ENCODE measurements at regions of chr12 and their contacts with region 1.

Region 1: DNA sequence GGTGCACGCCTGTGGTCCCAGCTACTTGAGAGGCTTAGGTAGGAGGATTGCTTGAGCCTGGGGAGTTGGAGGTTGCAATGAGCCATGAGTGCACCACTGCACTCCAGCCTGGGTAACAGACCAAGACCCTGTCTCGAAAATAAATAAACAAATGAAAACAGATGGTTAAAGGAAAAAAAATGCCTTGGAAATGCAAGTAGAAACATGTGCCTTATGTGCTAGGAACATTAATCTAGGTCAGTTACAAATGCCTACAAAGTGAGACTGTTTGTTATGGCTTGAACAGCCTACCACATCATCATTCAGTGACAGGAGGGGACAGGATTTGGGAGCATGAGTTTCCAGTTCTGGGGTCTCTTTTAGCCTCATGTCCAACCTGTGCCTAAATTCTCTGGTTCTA is 52.4 kb upstream of the BCAT1 start:
- DNase-seq: no peak
- CTCF ChIP-seq: no peak

Region 2: DNA sequence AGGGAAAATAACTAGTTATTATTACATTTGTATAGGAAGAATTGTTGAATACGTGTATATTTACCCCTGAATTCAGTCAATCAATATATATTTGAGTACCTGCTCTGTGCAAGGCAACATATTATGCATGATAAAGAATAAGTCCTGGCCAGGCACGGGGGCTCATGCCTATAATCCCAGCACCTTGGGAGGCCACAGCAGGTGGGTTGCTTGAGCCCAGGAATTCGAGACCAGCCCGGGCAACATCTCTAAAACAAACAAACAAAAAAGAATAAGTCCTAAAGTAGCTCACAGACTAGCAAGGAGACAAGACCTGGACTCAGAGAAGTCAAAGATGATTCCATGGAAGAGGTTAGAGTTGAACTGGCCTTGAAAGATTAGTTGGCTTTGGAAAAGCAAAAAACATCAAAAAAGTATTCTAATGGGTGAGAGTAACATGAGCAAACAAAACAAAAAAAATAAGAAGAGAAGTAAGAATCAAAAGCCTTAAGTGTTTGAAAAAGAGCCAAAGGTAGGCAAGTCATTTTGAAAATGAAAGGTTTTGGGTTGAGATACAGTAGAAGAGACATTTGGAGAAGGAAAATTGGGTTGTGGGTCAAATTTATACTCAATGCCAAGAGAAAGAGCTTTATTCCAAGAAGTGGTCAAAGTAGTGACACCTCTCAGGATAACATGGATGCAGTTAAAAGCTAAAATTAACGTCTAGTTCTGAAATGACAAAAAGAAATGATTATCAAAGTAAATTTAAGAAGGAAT is 62.7 kb after region 1 on chr12:
- in situ Hi-C with region 1: loop called (anchors 5 kb)
- DNase-seq: no peak
- CTCF ChIP-seq: no peak

Region 3: GRCh38 chr12:26028953-26029735 is 1027.8 kb after region 1 on chr12:
- in situ Hi-C with region 1: no loop called
- DNase-seq: peak; percentile 47
- CTCF ChIP-seq: peak; percentile 46

Measured in GM13976 (cell line).